Activated naive CD4-positive, alpha-beta T cell treated with anti-CD3 and anti-CD28 coated beads for 36 hours (primary cell): ENCODE measurements at regions of chr4 and their contacts with region 1.

Region 1: GRCh38 chr4:183335369-183335940 is 13.2 kb upstream of the CLDN24 start:
- DNase-seq: no peak
- H3K4me3 Mint-ChIP-seq: no peak overlapping the region
- H3K27ac Mint-ChIP-seq: no peak overlapping the region
- H3K4me1 Mint-ChIP-seq: peaks cover 4% of the 10 kb centered on the region
- H3K27me3 Mint-ChIP-seq: peaks cover 8% of the 10 kb centered on the region

Region 2: GRCh38 chr4:182975806-182976205 is 359.6 kb before region 1 on chr4:
- CTCF ChIA-PET with region 1: no interaction called
- intact Hi-C with region 1: no loop called
- DNase-seq: peak; percentile 17
- H3K4me3 Mint-ChIP-seq: no peak overlapping the region
- H3K27ac Mint-ChIP-seq: no peak overlapping the region
- H3K4me1 Mint-ChIP-seq: peaks cover 4% of the 10 kb centered on the region
- H3K27me3 Mint-ChIP-seq: peaks cover 33% of the 10 kb centered on the region

Region 3: GRCh38 chr4:183264614-183265013 is 70.8 kb before region 1 on chr4:
- CTCF ChIA-PET with region 1: no interaction called
- intact Hi-C with region 1: no loop called
- DNase-seq: no peak
- H3K4me3 Mint-ChIP-seq: no peak overlapping the region
- H3K27ac Mint-ChIP-seq: no peak overlapping the region
- H3K4me1 Mint-ChIP-seq: peaks cover 6% of the 10 kb centered on the region
- H3K27me3 Mint-ChIP-seq: no peaks in the 10 kb centered on the region

Region 4: GRCh38 chr4:183318656-183319055 is 16.8 kb before region 1 on chr4:
- CTCF ChIA-PET with region 1: no interaction called
- intact Hi-C with region 1: no loop called
- DNase-seq: no peak
- H3K4me3 Mint-ChIP-seq: no peak overlapping the region
- H3K27ac Mint-ChIP-seq: no peak overlapping the region
- H3K4me1 Mint-ChIP-seq: peaks cover 7% of the 10 kb centered on the region
- H3K27me3 Mint-ChIP-seq: no peaks in the 10 kb centered on the region

Region 5: GRCh38 chr4:183348706-183349659 is 13.5 kb after region 1 on chr4:
- CTCF ChIA-PET with region 1: no interaction called
- intact Hi-C with region 1: loop called (anchors 1 kb)
- DNase-seq: peak; percentile 73
- H3K4me3 Mint-ChIP-seq: no peak overlapping the region
- H3K27ac Mint-ChIP-seq: no peak overlapping the region
- H3K4me1 Mint-ChIP-seq: peaks cover 17% of the 10 kb centered on the region
- H3K27me3 Mint-ChIP-seq: peaks cover 28% of the 10 kb centered on the region

Region 6: DNA sequence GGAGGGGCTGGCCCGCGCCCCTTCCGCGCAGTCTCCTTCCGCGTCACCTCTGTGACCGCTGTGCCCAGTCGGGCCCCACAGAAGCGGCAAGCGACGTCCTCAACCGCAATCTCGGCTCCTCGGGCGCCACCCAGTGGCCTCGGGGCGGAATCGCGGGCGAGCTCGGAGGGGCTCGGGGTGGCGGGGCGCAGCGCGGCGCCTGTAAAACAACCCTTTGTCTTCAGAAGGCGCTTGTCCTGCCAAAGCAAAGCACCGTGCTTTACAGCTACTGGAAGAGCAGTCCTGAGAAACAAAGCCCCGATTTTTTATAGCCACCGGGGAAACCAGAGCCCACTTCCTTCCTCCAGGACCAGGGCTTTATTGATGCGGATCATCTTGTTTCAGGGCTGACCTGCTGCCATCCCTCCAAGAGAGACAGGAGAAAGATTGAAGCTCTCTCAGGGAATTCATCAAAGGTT is 71.7 kb after region 1 on chr4:
- CTCF ChIA-PET with region 1: no interaction called
- intact Hi-C with region 1: loop called (anchors 2 kb)
- DNase-seq: peak; percentile 94
- H3K4me3 Mint-ChIP-seq: peak overlapping the region; percentile 76
- H3K27ac Mint-ChIP-seq: peak overlapping the region; percentile 79
- H3K4me1 Mint-ChIP-seq: peaks cover 6% of the 10 kb centered on the region
- H3K27me3 Mint-ChIP-seq: no peaks in the 10 kb centered on the region

Region 7: GRCh38 chr4:183438458-183439113 is 103.1 kb after region 1 on chr4:
- CTCF ChIA-PET with region 1: no interaction called
- intact Hi-C with region 1: no loop called
- DNase-seq: no peak
- H3K4me3 Mint-ChIP-seq: no peak overlapping the region
- H3K27ac Mint-ChIP-seq: no peak overlapping the region
- H3K4me1 Mint-ChIP-seq: peaks cover 24% of the 10 kb centered on the region
- H3K27me3 Mint-ChIP-seq: no peaks in the 10 kb centered on the region